ENCODE measurements at regions of chr10 and their contacts with region 1.

Region 1: GRCh38 chr10:60816628-60817397 is 38.5 kb downstream of the CDK1 start:
- DNase-seq: peak; percentile 71
- ATAC-seq: peak; percentile 89
- H3K4me3 ChIP-seq: no peak overlapping the region
- H3K27ac ChIP-seq: no peak overlapping the region
- H3K4me1 ChIP-seq: no peaks in the 10 kb centered on the region
- H3K27me3 ChIP-seq: no peaks in the 10 kb centered on the region
- CTCF ChIP-seq: peak; percentile 86
- EP300 ChIP-seq: no peak
- POLR2A ChIP-seq: no peak
- RAD21 ChIP-seq: peak; percentile 52

Region 2: GRCh38 chr10:60964257-60965235 is 147.7 kb after region 1 on chr10:
- CTCF ChIA-PET with region 1: interaction called, 9 read pairs
- POLR2A ChIA-PET with region 1: no interaction called
- in situ Hi-C with region 1: loop called (anchors 10 kb)
- intact Hi-C with region 1: loop called (anchors 2 kb)
- DNase-seq: peak; percentile 63
- ATAC-seq: peak; percentile 56; the same call in 2 of the 3 replicates
- H3K4me3 ChIP-seq: no peak overlapping the region
- H3K27ac ChIP-seq: no peak overlapping the region
- H3K4me1 ChIP-seq: peaks cover 44% of the 10 kb centered on the region
- H3K27me3 ChIP-seq: no peaks in the 10 kb centered on the region
- CTCF ChIP-seq: peak; percentile 74
- EP300 ChIP-seq: no peak
- POLR2A ChIP-seq: no peak
- RAD21 ChIP-seq: peak; percentile 59

Region 3: GRCh38 chr10:61188691-61189090 is 371.9 kb after region 1 on chr10:
- CTCF ChIA-PET with region 1: interaction called, 6 read pairs
- POLR2A ChIA-PET with region 1: no interaction called
- in situ Hi-C with region 1: no loop called
- intact Hi-C with region 1: loop called (anchors 1 kb)
- DNase-seq: no peak
- ATAC-seq: no peak
- H3K4me3 ChIP-seq: no peak overlapping the region
- H3K27ac ChIP-seq: no peak overlapping the region
- H3K4me1 ChIP-seq: 0 out of 2 replicates have a peak, but pooled peaks cover 5% of the 10 kb centered on the region
- H3K27me3 ChIP-seq: no peaks in the 10 kb centered on the region; a peak in 1 of 5 replicates
- CTCF ChIP-seq: no peak
- EP300 ChIP-seq: no peak
- POLR2A ChIP-seq: no peak
- RAD21 ChIP-seq: no peak

Region 4: GRCh38 chr10:61606951-61607907 is 790.4 kb after region 1 on chr10:
- CTCF ChIA-PET with region 1: no interaction called
- POLR2A ChIA-PET with region 1: no interaction called
- in situ Hi-C with region 1: loop called (anchors 25 kb)
- intact Hi-C with region 1: no loop called
- DNase-seq: peak; percentile 14
- ATAC-seq: peak; percentile 50
- H3K4me3 ChIP-seq: no peak overlapping the region
- H3K27ac ChIP-seq: no peak overlapping the region
- H3K4me1 ChIP-seq: no peaks in the 10 kb centered on the region
- H3K27me3 ChIP-seq: no peaks in the 10 kb centered on the region; a peak in 1 of 5 replicates
- CTCF ChIP-seq: peak; percentile 23; the same call in 1 of the 2 replicates
- EP300 ChIP-seq: no peak
- POLR2A ChIP-seq: no peak
- RAD21 ChIP-seq: no peak

Region 5: DNA sequence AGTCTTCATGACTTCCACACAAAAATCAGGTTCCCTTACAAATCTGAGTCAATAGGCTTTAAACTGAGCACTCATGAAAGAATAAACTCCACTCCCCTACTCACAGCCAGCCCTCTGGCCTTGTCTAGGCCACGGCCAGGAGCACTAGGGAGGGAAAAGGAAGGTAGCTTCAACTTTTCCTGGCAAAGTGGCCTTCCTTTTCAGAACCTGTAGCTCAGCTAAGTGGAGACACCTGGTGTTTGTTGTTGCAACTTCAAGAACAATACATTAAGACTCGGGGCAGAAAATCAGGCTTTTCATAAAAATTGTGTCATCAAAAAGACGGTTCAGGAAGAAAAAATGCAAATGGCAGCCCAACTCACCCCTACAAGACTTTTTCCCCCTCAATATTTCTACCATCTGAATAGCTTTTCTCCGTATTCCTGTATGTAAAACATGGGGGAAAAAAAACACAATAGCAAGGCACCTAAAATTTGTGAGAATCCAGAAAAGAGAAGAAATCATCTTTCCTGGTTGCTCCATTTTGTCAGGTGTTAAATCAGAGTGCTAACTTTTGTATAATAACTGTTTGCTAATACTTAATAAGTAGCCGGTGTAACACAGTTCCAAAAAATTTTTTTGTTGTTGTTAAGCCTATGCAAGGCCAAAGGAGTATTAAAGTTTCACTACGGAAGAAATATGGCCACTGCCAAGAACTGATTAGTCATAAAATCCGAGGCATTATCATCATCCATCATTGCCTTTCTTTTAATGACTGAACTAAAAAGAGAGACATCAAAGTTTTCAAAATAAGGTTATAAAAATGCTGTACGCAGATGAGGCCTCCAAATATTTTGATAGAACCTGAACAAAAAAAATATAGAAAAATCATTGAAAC is 1018.5 kb after region 1 on chr10:
- CTCF ChIA-PET with region 1: no interaction called
- POLR2A ChIA-PET with region 1: no interaction called
- in situ Hi-C with region 1: no loop called
- intact Hi-C with region 1: loop called (anchors 10 kb)
- DNase-seq: peak; percentile 44
- ATAC-seq: peak; percentile 39; the same call in 1 of the 3 replicates
- H3K4me3 ChIP-seq: no peak overlapping the region
- H3K27ac ChIP-seq: no peak overlapping the region
- H3K4me1 ChIP-seq: peaks cover 66% of the 10 kb centered on the region
- H3K27me3 ChIP-seq: no peaks in the 10 kb centered on the region; a peak in 1 of 5 replicates
- CTCF ChIP-seq: peak; percentile 61
- EP300 ChIP-seq: no peak
- POLR2A ChIP-seq: no peak
- RAD21 ChIP-seq: peak; percentile 58